Panc1 (cell line): ENCODE measurements at regions of chr10 and their contacts with region 1.

Region 1: GRCh38 chr10:94803307-94803706 is 40.8 kb downstream of the CYP2C19 start:
- DNase-seq: no peak
- ATAC-seq: no peak
- H3K4me3 ChIP-seq: no peak overlapping the region
- H3K27ac ChIP-seq: no peak overlapping the region
- H3K4me1 ChIP-seq: no peaks in the 10 kb centered on the region
- H3K27me3 ChIP-seq: no peaks in the 10 kb centered on the region
- CTCF ChIP-seq: no peak

Region 2: DNA sequence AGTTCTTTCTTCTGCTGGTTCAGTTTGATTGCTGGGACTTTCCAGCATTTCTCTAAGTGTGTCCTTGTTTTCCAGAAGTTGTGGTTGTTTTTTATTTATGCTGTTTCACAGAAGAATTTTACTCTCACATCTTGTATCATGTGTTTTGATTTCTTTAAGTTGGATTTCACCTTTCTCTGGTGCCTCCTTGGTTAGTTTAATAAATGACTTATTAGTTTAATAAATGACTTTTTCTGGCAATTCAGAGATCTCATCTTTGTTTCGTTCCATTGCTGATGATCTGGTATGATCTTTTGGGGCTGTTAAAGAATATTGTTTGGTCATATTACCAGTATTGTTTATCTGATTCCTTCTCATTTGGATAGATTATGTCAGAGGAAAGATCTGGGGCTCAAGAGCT is 75.3 kb after region 1 on chr10:
- CTCF ChIA-PET with region 1: no interaction called
- POLR2A ChIA-PET with region 1: no interaction called
- in situ Hi-C with region 1: no loop called
- intact Hi-C with region 1: loop called (anchors 1 kb)
- DNase-seq: no peak
- ATAC-seq: no peak
- H3K4me3 ChIP-seq: no peak overlapping the region
- H3K27ac ChIP-seq: no peak overlapping the region
- H3K4me1 ChIP-seq: no peaks in the 10 kb centered on the region
- H3K27me3 ChIP-seq: no peaks in the 10 kb centered on the region
- CTCF ChIP-seq: no peak